ENCODE measurements at regions of chr2 and their contacts with region 1.

Region 1: DNA sequence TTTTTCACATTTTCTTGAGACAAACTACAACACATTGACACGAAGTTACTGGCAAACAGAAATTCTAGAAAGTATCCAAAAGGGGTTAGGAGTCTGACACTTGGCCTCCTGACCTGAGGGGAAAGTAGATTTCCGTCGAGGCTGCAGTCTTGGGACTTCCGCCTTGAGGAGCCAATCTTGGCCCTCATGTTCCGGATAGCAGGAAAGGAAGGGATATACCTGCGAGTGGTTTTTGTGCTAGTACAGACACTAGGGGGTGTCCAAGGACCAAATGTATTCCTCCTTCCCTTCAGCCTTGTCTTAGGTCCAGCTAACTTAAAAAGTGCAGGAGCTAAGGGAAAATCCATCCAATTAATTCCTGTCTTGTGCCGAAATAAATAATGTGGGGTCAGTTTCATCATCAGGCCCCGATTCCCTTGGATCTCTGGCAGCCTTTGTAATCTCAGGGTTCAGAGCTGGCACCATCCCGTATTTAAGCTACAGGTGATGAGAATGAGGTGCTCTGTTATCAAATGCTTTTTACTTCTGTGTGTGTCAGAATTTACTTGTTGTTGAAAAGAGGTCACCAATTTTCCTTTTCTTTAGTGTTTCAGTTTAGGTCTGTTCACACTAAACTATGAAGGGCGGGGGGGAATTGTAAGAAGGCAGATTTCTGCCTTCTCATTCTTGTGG is 330.2 kb upstream of the FANCL start:
- DNase-seq: peak; percentile 46 to 85 (median 60)
- ATAC-seq: peak; percentile 99
- H3K4me3 ChIP-seq: no peak overlapping the region
- H3K27ac ChIP-seq: no peak overlapping the region; the same call in 2 of the 3 replicates
- H3K4me1 ChIP-seq: peaks cover 0 to 3% of the 10 kb centered on the region in 2 experiments; a peak in 1 of 5 replicates
- H3K27me3 ChIP-seq: no peaks in the 10 kb centered on the region
- CTCF ChIP-seq: peak; percentile 74 to 82 (median 76)
- EP300 ChIP-seq: no peak
- POLR2A ChIP-seq: no peak
- RAD21 ChIP-seq: peak; percentile 93 to 96

Region 2: DNA sequence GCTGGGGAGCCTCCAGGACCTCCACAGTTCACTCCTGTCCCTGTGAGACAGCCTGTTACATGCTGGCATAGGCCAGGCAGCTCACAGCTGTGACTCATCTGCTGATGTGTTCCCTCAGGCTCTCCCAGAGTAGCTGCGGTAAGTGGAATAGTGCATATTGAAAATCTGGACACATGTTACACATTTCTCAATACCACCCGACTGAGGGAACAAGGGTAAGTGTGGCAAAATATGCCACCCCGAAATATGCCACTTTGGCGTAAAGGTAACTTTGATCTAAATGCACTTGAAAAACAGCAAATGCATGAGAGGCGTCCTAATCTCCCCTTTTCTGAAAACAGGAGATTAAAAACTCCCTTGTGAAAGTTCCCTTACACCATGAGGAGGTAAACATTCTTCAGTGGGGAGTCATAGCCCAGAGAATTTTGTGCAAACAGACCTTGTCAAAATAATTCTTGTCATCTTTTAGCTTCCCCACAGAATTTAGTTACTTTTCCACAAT is 1829.7 kb before region 1 on chr2:
- CTCF ChIA-PET with region 1: no interaction called
- POLR2A ChIA-PET with region 1: no interaction called
- in situ Hi-C with region 1: no loop called
- intact Hi-C with region 1: no loop called
- DNase-seq: no peak
- ATAC-seq: no peak
- H3K4me3 ChIP-seq: no peak overlapping the region
- H3K27ac ChIP-seq: no peak overlapping the region
- H3K4me1 ChIP-seq: no peaks in the 10 kb centered on the region
- H3K27me3 ChIP-seq: no peaks in the 10 kb centered on the region
- CTCF ChIP-seq: no peak
- EP300 ChIP-seq: no peak
- POLR2A ChIP-seq: no peak
- RAD21 ChIP-seq: no peak

Region 3: GRCh38 chr2:57044931-57045635 is 1526.2 kb before region 1 on chr2:
- CTCF ChIA-PET with region 1: no interaction called
- POLR2A ChIA-PET with region 1: no interaction called
- in situ Hi-C with region 1: no loop called
- intact Hi-C with region 1: no loop called
- DNase-seq: no peak
- ATAC-seq: no peak
- H3K4me3 ChIP-seq: no peak overlapping the region
- H3K27ac ChIP-seq: no peak overlapping the region
- H3K4me1 ChIP-seq: no peaks in the 10 kb centered on the region
- H3K27me3 ChIP-seq: no peaks in the 10 kb centered on the region
- CTCF ChIP-seq: no peak
- EP300 ChIP-seq: no peak
- POLR2A ChIP-seq: no peak
- RAD21 ChIP-seq: no peak

Region 4: GRCh38 chr2:57776916-57777315 is 794.4 kb before region 1 on chr2:
- CTCF ChIA-PET with region 1: no interaction called
- POLR2A ChIA-PET with region 1: no interaction called
- in situ Hi-C with region 1: no loop called
- intact Hi-C with region 1: no loop called
- DNase-seq: peak in 2 of 4 experiments; percentile 47 to 66
- ATAC-seq: peak; percentile 88
- H3K4me3 ChIP-seq: no peak overlapping the region
- H3K27ac ChIP-seq: no peak overlapping the region
- H3K4me1 ChIP-seq: peaks cover 0 to 3% of the 10 kb centered on the region in 2 experiments; a peak in 1 of 5 replicates
- H3K27me3 ChIP-seq: no peaks in the 10 kb centered on the region
- CTCF ChIP-seq: no peak
- EP300 ChIP-seq: peak; percentile 63
- POLR2A ChIP-seq: no peak
- RAD21 ChIP-seq: no peak

Region 5: GRCh38 chr2:58664523-58665151 is 93.3 kb after region 1 on chr2:
- CTCF ChIA-PET with region 1: no interaction called
- POLR2A ChIA-PET with region 1: no interaction called
- in situ Hi-C with region 1: no loop called
- intact Hi-C with region 1: loop called (anchors 2 kb)
- DNase-seq: peak in 2 of 4 experiments; percentile 10 to 31
- ATAC-seq: no peak
- H3K4me3 ChIP-seq: no peak overlapping the region
- H3K27ac ChIP-seq: no peak overlapping the region
- H3K4me1 ChIP-seq: peaks cover 6 to 30% of the 10 kb centered on the region in 2 experiments; a peak in 4 of 5 replicates
- H3K27me3 ChIP-seq: no peaks in the 10 kb centered on the region
- CTCF ChIP-seq: no peak
- EP300 ChIP-seq: no peak
- POLR2A ChIP-seq: no peak
- RAD21 ChIP-seq: no peak

Region 6: DNA sequence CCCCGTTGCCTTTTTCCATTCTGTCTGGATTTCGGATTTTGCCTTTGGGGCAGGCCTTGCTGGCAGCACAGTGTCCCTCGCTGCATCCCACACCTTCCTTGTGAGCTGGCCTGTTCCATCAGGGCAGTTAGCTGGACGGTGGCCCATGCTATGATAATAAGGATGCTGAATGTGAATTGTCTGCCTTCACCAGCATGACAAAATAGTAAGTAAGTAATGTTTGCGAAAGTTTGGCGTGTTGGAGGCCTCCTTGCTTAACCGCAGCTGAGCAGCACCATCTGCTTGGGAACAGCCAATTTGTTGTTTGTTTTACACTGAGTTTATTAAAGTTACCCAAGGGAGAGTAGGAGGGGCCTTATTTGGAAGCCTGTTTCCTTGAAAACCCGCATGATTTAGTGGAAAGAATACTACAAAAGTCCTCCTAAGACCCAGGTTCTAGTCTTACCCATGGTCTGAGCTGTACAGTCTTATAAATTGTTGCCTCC is 139.5 kb after region 1 on chr2:
- CTCF ChIA-PET with region 1: no interaction called
- POLR2A ChIA-PET with region 1: no interaction called
- in situ Hi-C with region 1: no loop called
- intact Hi-C with region 1: loop called (anchors 1 kb)
- DNase-seq: peak in 2 of 4 experiments; percentile 48 to 70
- ATAC-seq: peak; percentile 64
- H3K4me3 ChIP-seq: no peak overlapping the region
- H3K27ac ChIP-seq: peak overlapping the region; percentile 69
- H3K4me1 ChIP-seq: peaks cover 3 to 36% of the 10 kb centered on the region in 2 experiments; a peak in 4 of 5 replicates
- H3K27me3 ChIP-seq: no peaks in the 10 kb centered on the region
- CTCF ChIP-seq: peak in 1 of 3 experiments; percentile 13; a peak in 1 of 6 replicates
- EP300 ChIP-seq: 0 out of 2 replicates have a peak, but pooled peaks have one; percentile 6
- POLR2A ChIP-seq: no peak
- RAD21 ChIP-seq: peak in 1 of 2 experiments; percentile 31; a peak in 2 of 4 replicates

Region 7: GRCh38 chr2:58762176-58762781 is 191.0 kb after region 1 on chr2:
- CTCF ChIA-PET with region 1: no interaction called
- POLR2A ChIA-PET with region 1: no interaction called
- in situ Hi-C with region 1: no loop called
- intact Hi-C with region 1: loop called (anchors 1 kb)
- DNase-seq: peak; percentile 13 to 78 (median 28)
- ATAC-seq: peak; percentile 92
- H3K4me3 ChIP-seq: no peak overlapping the region
- H3K27ac ChIP-seq: no peak overlapping the region
- H3K4me1 ChIP-seq: peaks cover 3 to 15% of the 10 kb centered on the region in 2 experiments; a peak in 4 of 5 replicates
- H3K27me3 ChIP-seq: no peaks in the 10 kb centered on the region
- CTCF ChIP-seq: peak; percentile 64 to 68 (median 64)
- EP300 ChIP-seq: no peak
- POLR2A ChIP-seq: no peak
- RAD21 ChIP-seq: peak; percentile 73 to 82

Region 8: DNA sequence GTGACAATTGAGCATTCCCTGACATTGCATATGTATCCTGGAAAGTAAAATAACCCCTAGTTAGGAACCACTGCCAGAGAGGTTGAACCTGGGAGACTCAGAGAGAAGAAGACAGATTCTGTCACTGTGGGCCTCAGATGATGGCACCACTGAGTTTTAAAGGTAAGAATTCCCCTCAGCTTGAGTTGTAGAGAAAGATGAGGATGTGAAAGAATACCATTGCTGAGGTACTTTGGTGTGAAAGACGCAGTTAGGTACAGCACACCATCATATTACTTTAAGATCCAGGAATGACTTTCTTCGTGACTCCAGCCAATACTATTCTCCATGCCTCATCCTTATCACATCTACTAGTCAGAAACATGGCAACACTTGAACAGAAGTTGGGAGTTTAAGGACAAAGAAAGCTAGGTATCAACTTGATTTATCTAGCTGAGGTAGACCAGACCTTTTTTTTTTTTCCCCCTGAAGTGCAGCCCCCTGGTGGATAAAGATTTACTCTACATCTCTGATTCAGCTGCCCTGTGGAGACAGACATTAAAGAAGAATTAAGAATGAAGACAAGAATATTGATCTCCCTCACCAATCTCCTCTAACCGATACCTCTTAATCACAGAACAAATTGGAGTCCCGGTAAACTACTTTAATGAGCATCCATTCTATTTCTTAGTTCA is 300.3 kb after region 1 on chr2:
- CTCF ChIA-PET with region 1: no interaction called
- POLR2A ChIA-PET with region 1: no interaction called
- in situ Hi-C with region 1: no loop called
- intact Hi-C with region 1: loop called (anchors 5 kb)
- DNase-seq: peak in 3 of 4 experiments; percentile 10 to 21 (median 16)
- ATAC-seq: peak; percentile 76
- H3K4me3 ChIP-seq: no peak overlapping the region
- H3K27ac ChIP-seq: no peak overlapping the region
- H3K4me1 ChIP-seq: no peaks in the 10 kb centered on the region
- H3K27me3 ChIP-seq: no peaks in the 10 kb centered on the region
- CTCF ChIP-seq: peak; percentile 17 to 40 (median 20); a peak in 3 of 6 replicates
- EP300 ChIP-seq: no peak
- POLR2A ChIP-seq: no peak
- RAD21 ChIP-seq: peak in 1 of 2 experiments; percentile 48; a peak in 2 of 4 replicates

Region 9: DNA sequence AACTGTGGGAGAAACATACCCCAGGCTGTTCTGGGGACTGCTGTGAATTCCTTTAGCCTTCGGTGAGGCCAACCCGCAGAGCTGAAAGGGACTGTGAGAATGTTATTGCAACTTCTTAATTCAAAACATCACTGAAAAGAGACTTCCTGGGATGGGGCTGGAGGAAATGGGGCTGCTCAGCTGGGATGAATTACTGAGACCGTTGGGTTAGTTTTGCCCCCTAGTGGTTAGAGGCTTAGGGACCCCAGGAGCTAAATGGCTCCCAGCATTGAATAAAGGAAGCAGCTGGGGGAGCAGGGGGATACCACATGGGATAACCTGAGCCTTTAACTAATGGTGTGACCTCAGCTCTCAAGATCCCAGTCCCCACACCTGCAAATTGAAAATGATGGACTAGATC is 610.9 kb after region 1 on chr2:
- CTCF ChIA-PET with region 1: no interaction called
- POLR2A ChIA-PET with region 1: no interaction called
- in situ Hi-C with region 1: no loop called
- intact Hi-C with region 1: loop called (anchors 10 kb)
- DNase-seq: peak; percentile 25 to 54 (median 42)
- ATAC-seq: peak; percentile 89
- H3K4me3 ChIP-seq: no peak overlapping the region
- H3K27ac ChIP-seq: no peak overlapping the region
- H3K4me1 ChIP-seq: no peaks in the 10 kb centered on the region; a peak in 1 of 5 replicates
- H3K27me3 ChIP-seq: no peaks in the 10 kb centered on the region
- CTCF ChIP-seq: peak; percentile 47 to 61 (median 60)
- EP300 ChIP-seq: no peak
- POLR2A ChIP-seq: no peak
- RAD21 ChIP-seq: peak; percentile 48 to 63

Region 10: GRCh38 chr2:60152226-60152833 is 1581.0 kb after region 1 on chr2:
- CTCF ChIA-PET with region 1: no interaction called
- POLR2A ChIA-PET with region 1: no interaction called
- in situ Hi-C with region 1: no loop called
- intact Hi-C with region 1: loop called (anchors 10 kb)
- DNase-seq: peak; percentile 30 to 57 (median 52)
- ATAC-seq: peak; percentile 54; the same call in 1 of the 3 replicates
- H3K4me3 ChIP-seq: no peak overlapping the region
- H3K27ac ChIP-seq: no peak overlapping the region
- H3K4me1 ChIP-seq: no peaks in the 10 kb centered on the region
- H3K27me3 ChIP-seq: no peaks in the 10 kb centered on the region
- CTCF ChIP-seq: peak; percentile 29 to 72 (median 69); a peak in 5 of 6 replicates
- EP300 ChIP-seq: no peak
- POLR2A ChIP-seq: no peak
- RAD21 ChIP-seq: peak; percentile 55 to 71